K562 (cell line): ENCODE measurements at regions of chr19 and their contacts with region 1.

Region 1: DNA sequence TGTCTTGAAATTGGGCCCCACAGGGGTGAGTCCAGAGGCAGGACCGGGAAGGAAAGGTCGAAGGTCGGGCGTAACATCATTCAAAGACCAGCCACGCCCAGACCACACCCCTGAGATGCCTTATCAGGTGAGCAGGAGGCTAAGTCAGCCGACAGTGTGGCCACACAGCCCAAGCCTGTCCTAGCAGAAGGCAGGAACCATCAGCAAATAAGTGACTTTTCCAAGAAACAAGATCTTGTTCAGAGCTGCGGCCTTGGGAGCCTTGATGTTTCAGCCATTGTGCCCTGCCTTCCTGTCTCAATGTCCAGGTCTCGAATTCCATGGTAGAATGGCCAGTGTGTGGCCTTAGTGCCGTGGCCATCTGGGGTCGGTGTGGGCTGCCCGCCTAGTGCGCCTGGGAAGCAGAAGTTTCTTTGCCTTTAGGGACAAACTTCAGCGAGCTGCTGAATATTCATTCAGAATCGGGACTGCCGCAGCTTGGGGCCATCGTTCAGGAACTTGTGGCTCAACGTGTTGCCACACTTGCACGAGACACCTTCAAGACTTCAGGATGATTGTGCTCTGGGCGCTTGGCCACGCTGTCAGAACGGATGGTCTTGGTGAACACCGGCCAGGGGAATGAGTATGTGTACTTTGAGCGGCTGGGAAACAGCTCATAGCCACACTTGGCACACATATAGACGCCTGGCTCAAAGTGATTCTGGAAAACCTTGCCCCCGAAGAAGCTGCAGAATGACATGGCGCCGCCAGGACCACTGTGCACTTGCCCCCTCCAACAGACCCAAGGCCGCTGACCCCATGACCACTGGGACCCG is 6.1 kb upstream of the IFNL4 start:
- DNase-seq: peak; percentile 90 to 95 (median 94)
- ATAC-seq: peak; percentile 89
- H3K4me3 ChIP-seq: no peak overlapping the region
- H3K27ac ChIP-seq: peak overlapping the region; percentile 79
- H3K4me1 ChIP-seq: peaks cover 49 to 61% of the 10 kb centered on the region in 2 experiments
- H3K27me3 ChIP-seq: no peaks in the 10 kb centered on the region
- CTCF ChIP-seq: no peak
- EP300 ChIP-seq: peak; percentile 28; the same call in 1 of the 2 replicates
- POLR2A ChIP-seq: peak; percentile 85
- RAD21 ChIP-seq: no peak

Region 2: GRCh38 chr19:39307046-39307823 is 52.5 kb after region 1 on chr19:
- CTCF ChIA-PET with region 1: no interaction called
- POLR2A ChIA-PET with region 1: no interaction called
- in situ Hi-C with region 1: no loop called
- intact Hi-C with region 1: loop called (anchors 10 kb)
- DNase-seq: peak in 2 of 4 experiments; percentile 38 to 58
- ATAC-seq: no peak
- H3K4me3 ChIP-seq: no peak overlapping the region
- H3K27ac ChIP-seq: no peak overlapping the region
- H3K4me1 ChIP-seq: peaks cover 40 to 43% of the 10 kb centered on the region in 2 experiments
- H3K27me3 ChIP-seq: no peaks in the 10 kb centered on the region
- CTCF ChIP-seq: no peak
- EP300 ChIP-seq: no peak
- POLR2A ChIP-seq: no peak
- RAD21 ChIP-seq: no peak